ENCODE measurements at regions of chr17 and their contacts with region 1.

Region 1: DNA sequence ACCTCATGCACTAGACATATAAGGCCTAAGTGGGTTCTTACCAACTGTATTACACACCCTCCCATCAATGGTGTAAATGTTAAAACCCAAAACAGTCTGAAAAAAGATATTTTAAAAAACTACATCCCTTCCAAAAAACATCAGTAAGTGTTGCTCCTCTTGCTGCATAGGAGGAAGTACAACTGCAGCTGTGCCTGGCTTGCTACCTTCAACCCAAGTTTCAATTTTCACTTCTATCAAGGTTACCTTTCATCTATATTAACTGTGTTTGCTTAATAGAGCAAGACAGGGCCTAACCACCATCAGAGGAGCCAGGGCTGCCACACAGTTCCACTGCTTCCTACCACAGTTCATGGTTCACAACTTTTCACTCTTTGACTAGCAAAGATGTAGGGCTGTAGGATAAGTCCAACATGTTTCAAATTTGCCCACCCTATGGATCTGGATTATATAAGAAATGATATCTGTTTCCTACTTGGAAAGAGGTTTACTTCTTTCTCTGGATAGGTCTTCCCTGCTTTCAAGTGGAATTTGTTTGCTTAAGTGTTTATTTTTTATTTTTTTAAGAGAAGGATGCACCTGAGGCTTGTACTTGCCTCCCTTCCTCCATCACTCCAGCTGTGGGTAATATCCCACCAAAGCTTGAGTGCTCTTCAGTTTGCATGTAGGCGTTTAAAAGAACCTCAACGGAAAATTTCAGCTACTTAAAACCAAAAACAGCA is 56.7 kb downstream of the GRB7 start:
- DNase-seq: no peak
- H3K4me3 Mint-ChIP-seq: peak overlapping the region; percentile 3
- H3K27ac Mint-ChIP-seq: peak overlapping the region; percentile 75
- H3K4me1 Mint-ChIP-seq: peaks cover 65% of the 10 kb centered on the region
- H3K27me3 Mint-ChIP-seq: no peaks in the 10 kb centered on the region

Region 2: DNA sequence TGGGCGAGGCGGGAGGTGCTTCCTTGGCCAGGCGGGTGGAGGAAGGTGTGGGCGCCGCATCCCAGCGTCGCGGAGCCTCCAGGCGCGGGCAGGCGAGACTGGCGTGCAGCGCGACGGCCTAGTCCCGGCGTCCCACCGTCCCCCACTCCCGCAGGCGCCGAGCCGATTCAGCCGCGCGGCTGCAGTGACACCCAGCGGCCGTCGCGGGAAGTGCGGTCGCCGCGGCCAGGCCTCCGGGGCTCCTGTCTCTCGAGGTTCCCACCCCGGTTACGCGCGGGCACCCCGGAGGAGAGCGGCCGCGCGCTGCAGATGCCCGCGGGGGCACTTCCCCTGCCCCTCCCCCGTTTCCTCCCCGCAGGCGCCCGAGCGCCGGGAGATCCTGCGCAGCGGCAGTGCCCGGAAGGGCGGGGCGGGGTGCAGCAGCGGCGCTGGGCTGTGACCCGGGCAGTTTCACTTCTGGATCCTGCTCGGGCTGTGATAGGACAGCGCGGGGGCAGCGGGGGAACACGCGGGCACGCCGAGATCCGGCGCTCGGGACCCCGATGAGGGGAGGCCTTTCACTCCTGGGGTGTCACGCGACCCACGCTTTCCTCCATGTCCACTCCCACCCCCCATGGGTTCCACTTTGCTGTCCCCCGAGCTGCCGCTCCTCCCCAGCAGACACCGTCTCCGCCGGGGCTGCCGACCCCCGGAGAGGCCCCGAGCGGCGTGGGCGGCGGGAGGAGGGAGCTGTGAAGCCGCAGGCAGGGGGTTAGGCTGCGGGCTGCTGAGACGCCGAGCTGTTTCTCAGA is 40.1 kb before region 1 on chr17:
- intact Hi-C with region 1: loop called (anchors 1 kb)
- DNase-seq: peak; percentile 98
- H3K4me3 Mint-ChIP-seq: peak overlapping the region; percentile 19
- H3K27ac Mint-ChIP-seq: peak overlapping the region; percentile 56
- H3K4me1 Mint-ChIP-seq: peaks cover 52% of the 10 kb centered on the region
- H3K27me3 Mint-ChIP-seq: no peaks in the 10 kb centered on the region

Region 3: GRCh38 chr17:39769974-39770587 is 24.3 kb before region 1 on chr17:
- intact Hi-C with region 1: loop called (anchors 1 kb)
- DNase-seq: peak; percentile 63
- H3K4me3 Mint-ChIP-seq: no peak overlapping the region
- H3K27ac Mint-ChIP-seq: peak overlapping the region; percentile 57
- H3K4me1 Mint-ChIP-seq: peaks cover 78% of the 10 kb centered on the region
- H3K27me3 Mint-ChIP-seq: no peaks in the 10 kb centered on the region

Region 4: DNA sequence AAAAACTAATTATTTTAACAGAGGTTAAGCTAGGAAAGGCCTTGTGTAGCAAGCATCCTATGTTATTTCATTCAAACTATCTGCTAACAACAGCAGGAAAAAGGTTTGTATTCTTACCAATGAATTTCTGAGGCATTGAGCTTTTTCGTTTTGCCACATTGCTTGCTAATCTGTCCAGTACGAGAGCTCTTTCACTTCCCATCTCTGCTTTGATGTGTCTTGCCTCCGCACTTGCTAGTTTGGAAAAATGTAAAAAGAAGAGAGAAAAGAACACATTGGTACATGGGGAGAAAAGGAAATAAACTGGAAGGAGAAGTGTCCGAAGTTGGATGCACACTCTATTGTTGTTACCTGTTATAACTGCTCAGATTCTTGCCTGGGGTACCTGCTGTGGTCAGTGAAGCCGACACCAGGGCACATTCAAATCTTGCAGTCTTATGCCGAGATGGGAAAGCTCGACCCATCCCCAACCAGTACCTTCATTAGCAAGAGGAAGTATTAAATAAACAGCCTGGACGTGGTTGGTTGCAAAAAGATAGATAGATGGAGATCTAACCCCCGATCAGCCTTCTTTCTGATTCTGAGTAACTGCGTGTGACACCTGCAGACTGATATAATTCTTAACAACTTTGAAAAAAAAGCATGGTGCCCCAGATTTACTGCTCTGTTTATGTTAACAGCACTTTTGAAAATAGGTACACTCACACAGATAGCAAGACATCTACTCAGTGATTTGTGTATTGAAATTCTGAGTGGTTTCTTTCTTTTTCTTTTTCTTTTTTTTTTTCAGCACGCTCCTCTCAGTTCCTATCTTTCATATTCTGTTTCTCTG is 16.7 kb before region 1 on chr17:
- intact Hi-C with region 1: loop called (anchors 1 kb)
- DNase-seq: no peak
- H3K4me3 Mint-ChIP-seq: peak overlapping the region; percentile 84
- H3K27ac Mint-ChIP-seq: peak overlapping the region; percentile 77
- H3K4me1 Mint-ChIP-seq: peaks cover 72% of the 10 kb centered on the region
- H3K27me3 Mint-ChIP-seq: no peaks in the 10 kb centered on the region

Region 5: GRCh38 chr17:39813631-39814030 is 19.2 kb after region 1 on chr17:
- intact Hi-C with region 1: loop called (anchors 2 kb)
- DNase-seq: peak; percentile 60
- H3K4me3 Mint-ChIP-seq: peak overlapping the region; percentile 62
- H3K27ac Mint-ChIP-seq: peak overlapping the region; percentile 78
- H3K4me1 Mint-ChIP-seq: peaks cover 49% of the 10 kb centered on the region
- H3K27me3 Mint-ChIP-seq: no peaks in the 10 kb centered on the region

Region 6: DNA sequence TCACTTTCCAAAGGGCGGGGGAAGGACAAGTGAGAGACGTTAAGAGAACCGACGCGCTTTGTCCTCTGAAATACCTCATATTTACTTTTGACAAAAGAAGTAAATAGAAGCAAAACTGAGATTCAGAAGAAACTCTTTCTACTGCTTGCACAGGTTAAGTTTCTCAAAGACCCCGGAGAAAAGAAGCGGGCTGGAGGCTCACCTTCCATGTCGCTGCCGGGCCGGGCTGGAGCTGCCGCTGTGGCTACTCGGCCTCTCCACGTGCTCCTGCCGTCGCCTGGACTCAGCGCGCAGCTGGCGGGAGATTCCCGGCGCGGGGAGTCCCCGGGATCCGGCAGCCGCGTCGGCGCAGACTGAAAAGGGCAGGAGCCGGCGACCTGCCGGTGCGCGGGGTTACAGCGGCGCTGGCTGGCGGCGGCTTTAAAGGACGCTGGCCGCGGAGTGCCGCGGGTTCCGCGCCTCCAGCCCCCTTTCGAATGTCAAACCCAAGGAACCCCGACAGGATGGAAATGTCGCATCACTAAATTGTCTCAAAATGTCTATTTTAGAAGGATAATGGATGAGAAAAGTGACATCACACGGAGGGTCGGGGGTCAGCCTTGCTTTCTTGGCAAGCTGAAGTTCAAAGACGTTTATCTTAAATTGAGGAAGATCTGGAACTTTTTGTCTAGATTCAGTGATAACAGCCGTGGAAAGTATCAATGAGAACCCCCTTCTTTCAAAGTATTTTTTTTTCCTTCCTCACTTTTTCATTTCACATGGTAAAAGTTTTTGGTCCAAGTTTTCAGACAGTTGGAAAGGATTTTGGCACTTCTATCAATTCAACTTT is 69.7 kb after region 1 on chr17 and contains the start of gene IKZF3:
- intact Hi-C with region 1: loop called (anchors 1 kb)
- DNase-seq: peak; percentile 70
- H3K4me3 Mint-ChIP-seq: peak within 1 kb of the TSS; percentile 89
- H3K27ac Mint-ChIP-seq: peak within 1 kb of the TSS; percentile 82
- H3K4me1 Mint-ChIP-seq: peaks cover 60% of the 10 kb centered on the region
- H3K27me3 Mint-ChIP-seq: no peaks in the 10 kb centered on the region
- total RNA-seq, gene IKZF3: 18.3 and 20.3 TPM in 2 replicates

Region 7: DNA sequence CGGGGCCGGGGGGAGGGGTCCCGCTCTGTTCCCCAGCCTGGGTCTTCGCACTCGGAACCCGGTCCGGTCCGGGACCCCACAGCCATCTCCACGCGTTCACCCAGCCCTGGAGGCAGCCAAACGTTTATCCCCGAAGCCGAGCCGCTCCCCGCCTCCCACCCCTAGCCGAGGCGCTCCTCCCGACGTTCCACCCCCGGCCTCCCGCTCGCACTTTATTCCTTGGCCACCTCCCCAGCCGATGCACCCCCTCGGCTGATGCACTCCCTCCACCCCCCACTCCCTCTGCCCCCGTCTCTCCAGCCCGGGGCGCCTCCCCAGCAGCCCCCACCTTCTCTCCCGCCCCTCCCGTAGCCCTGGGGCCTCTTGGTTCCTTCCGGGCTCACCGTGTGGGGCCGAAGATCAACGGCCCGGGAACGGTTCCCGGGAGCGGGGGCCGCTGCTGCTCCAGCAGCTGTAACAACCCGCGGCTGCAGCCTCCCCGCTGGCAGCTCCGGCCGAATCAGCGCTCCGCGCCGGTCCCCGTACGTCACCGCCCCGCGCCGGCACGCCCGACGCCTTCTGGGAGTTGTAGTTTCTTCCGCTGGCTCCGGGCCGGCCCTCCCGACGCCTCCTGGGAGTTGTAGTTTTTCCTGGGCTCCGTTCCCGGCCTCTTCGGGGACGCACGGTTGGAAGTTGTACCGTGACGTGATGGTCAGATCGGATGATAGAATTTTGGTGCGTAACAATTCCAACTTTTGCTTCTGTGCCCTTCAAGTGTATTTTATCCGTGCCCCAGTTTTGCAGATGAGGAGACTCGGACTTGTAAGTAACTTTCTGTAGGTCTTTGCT is 132.9 kb after region 1 on chr17 and contains the starts of genes LRRC3C and ORMDL3:
- intact Hi-C with region 1: loop called (anchors 5 kb)
- DNase-seq: peak; percentile 89
- H3K4me3 Mint-ChIP-seq: peak within 1 kb of the TSS; percentile 86
- H3K27ac Mint-ChIP-seq: peak within 1 kb of the TSS; percentile 89
- H3K4me1 Mint-ChIP-seq: peaks cover 41% of the 10 kb centered on the region
- H3K27me3 Mint-ChIP-seq: no peaks in the 10 kb centered on the region
- total RNA-seq, gene LRRC3C: not detected in 2 replicates
- total RNA-seq, gene ORMDL3: 66.1 and 74.3 TPM in 2 replicates

Region 8: DNA sequence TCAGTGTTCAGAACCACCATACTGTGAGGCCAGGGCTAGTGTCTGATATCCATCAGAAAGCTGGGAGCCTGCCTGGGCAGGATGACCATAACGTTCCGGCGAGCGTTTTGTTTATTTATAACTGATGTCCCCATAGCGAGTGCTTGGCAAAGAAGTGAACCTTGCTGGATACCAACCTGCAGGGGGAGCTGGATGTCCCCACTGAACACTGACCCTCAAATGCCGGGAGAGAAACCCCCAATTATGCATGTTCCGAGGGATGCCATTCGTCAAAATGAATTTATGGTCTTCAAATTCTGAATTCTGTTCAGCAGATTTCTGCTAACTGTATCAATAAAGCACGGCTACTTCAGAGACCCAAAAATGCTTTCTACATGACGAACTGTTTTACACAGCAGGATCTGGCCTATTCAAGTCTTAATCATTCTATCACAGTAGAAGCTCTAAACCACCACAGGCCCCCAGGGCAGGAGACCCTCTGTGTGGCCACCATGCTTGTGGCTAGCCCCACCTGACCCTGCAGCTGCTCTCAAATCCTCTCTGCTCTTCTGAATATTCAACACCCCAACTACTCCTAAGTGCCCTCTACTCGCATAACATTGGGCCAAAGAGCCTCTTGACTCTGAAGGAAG is 244.6 kb after region 1 on chr17:
- intact Hi-C with region 1: no loop called
- DNase-seq: no peak
- H3K4me3 Mint-ChIP-seq: no peak overlapping the region
- H3K27ac Mint-ChIP-seq: no peak overlapping the region
- H3K4me1 Mint-ChIP-seq: no peaks in the 10 kb centered on the region
- H3K27me3 Mint-ChIP-seq: no peaks in the 10 kb centered on the region

Measured in activated T-helper 2 cell treated with anti-CD3 and anti-CD28 coated beads, Interferon-gamma antibody, Interleukin-2, Interleukin-4, amounts not matched to agents 10 μg/mL and 5 μg/mL and 100 μg/mL, durations not matched to agents 14 hours and 24 hours and 36 hours (primary cell).